ENCODE measurements at regions of chr3 and their contacts with region 1.

Region 1: GRCh38 chr3:6168256-6168655 is 692.7 kb upstream of the GRM7 start:
- DNase-seq: no peak
- ATAC-seq: no peak
- H3K4me3 ChIP-seq: no peak overlapping the region
- H3K27ac ChIP-seq: no peak overlapping the region
- H3K4me1 ChIP-seq: no peaks in the 10 kb centered on the region
- H3K27me3 ChIP-seq: no peaks in the 10 kb centered on the region
- CTCF ChIP-seq: no peak

Region 2: GRCh38 chr3:6108958-6109357 is 59.3 kb before region 1 on chr3:
- intact Hi-C with region 1: loop called in 1 of 2 experiments (anchors 2 kb)
- DNase-seq: no peak
- ATAC-seq: no peak
- H3K4me3 ChIP-seq: no peak overlapping the region
- H3K27ac ChIP-seq: no peak overlapping the region
- H3K4me1 ChIP-seq: no peaks in the 10 kb centered on the region
- H3K27me3 ChIP-seq: no peaks in the 10 kb centered on the region
- CTCF ChIP-seq: no peak

Region 3: DNA sequence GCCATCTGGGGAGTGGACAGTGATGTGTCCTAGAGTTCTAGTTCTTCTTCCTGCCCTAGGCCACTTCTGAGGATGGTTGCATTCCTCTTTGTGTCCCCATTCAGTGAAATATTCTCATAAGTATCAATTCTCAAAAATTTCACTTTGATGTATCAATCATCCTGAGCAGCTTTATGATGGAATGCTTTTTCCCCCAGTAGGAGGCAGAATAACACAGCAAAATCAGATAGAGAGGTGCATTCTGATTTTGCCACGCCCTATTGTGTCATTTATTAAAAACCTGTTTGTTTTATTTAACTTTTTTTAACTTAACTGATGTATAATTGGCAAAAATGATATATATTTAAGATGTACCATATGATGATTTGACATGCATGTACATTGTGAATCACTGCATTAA is 36.6 kb after region 1 on chr3:
- intact Hi-C with region 1: no loop called
- DNase-seq: no peak
- ATAC-seq: no peak
- H3K4me3 ChIP-seq: no peak overlapping the region
- H3K27ac ChIP-seq: no peak overlapping the region
- H3K4me1 ChIP-seq: no peaks in the 10 kb centered on the region
- H3K27me3 ChIP-seq: no peaks in the 10 kb centered on the region
- CTCF ChIP-seq: no peak

Measured in psoas muscle (tissue), 8 donors.